AG04450 (cell line): ENCODE measurements at regions of chr16 and their contacts with region 1.

Region 1: DNA sequence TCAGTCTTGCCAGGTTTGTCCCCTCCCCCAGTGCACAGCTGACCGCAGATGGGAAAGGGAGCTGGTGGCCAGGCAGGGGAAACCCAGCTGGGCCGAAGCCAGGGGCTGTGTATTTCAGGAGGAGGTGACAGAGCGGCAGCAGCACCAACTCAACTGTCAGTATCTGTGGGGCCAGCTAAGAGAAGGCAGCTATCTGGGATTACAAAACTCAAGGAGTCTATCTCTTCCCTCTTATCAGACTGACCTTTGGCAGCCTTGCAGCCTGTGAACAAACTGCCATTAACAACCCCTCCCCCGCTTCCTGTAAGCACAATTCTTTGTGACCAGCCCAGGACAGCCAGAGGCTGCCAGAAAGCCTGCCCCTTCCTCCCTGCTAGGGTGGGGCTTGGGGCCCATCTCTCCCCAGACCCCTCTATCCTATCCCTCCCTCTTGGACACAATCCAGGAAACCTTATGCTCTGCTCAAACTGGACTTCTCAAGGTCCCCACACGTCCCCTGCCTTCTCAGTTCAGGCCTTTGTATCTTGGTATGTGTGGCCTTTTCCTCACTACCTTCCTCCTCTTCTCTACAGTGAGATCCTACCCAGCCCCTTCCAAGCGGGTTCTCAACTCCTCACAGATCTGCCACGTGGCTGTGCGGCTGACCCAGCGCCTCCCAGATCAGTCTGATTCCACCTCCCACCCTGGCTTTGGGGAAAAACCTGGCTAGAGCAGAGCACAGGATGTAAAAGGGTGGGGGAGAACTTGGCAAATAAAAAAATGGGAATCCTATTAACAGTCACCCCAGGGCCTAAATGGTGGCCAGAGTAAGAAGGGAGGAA is 10.5 kb downstream of the ST3GAL2 start:
- DNase-seq: peak; percentile 87
- H3K4me3 ChIP-seq: peak overlapping the region; percentile 22
- H3K27ac ChIP-seq: peak overlapping the region; percentile 69
- H3K27me3 ChIP-seq: no peaks in the 10 kb centered on the region
- CTCF ChIP-seq: no peak

Region 2: DNA sequence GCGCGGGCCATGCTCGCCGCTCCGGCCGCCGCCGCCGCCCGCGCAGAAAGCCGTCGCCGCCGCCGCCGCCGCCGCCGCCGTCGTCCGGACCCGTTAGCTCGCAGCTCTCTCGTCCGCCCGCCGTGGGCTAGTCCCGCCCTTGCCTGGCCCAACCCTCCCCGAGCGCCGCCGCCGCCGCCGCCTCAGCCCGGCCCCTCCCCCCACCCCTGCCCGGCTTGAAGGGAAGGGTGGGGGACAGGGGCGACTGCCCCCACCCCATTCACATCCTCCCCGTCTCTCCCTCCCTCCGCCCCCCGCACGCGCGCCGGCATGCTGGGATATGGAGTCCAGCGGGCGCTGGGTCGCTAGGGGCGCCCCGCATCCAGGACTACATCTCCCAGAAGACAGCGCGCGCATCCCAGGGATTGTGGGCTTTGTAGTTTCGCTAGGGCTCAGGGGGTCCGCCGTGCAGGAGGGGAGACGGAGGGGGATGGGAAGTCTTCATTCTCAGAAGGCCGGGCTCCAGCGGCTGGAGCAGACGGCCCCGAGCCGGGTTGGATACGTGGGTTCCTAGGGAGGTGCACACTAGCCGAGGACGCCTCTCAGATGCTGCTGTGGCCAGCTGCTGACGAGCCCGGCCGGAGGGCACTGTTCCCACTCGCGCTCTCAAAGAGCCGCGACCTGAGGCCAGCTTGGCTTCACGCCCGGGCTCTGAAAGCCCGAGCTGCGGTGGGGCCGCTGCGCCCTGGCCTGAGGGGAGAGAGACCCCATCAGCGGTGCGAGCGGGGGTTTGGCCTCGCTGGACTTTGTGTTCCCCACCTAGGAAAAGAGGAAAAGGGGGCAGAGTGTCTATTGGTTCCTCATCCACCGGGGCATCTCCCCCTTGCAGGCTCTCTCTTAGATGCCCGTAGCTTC is 10.8 kb after region 1 on chr16 and contains the start of gene ST3GAL2:
- CTCF ChIA-PET with region 1: no interaction called
- POLR2A ChIA-PET with region 1: interaction called, 12 read pairs
- DNase-seq: peak; percentile 84
- H3K4me3 ChIP-seq: peak within 1 kb of the TSS; percentile 72
- H3K27ac ChIP-seq: peak within 1 kb of the TSS; percentile 31
- H3K27me3 ChIP-seq: no peaks in the 10 kb centered on the region
- CTCF ChIP-seq: 0 out of 2 replicates have a peak, but pooled peaks have one; percentile 14
- polyA plus RNA-seq, gene ST3GAL2: 12.4 and 18.2 TPM in 2 replicates